Heart right ventricle (tissue), 16 donors: ENCODE measurements at regions of chr10 and their contacts with region 1.

Region 1: GRCh38 chr10:112429147-112429546 is 17.6 kb downstream of the ZDHHC6 start:
- DNase-seq: no peak
- ATAC-seq: no peak
- H3K4me3 ChIP-seq: no peak overlapping the region
- H3K27ac ChIP-seq: no peak overlapping the region
- H3K4me1 ChIP-seq: no peaks in the 10 kb centered on the region
- H3K27me3 ChIP-seq: no peaks in the 10 kb centered on the region
- CTCF ChIP-seq: no peak

Region 2: GRCh38 chr10:112195224-112195623 is 233.9 kb before region 1 on chr10:
- intact Hi-C with region 1: loop called in 1 of 10 experiments (anchors 10 kb)
- DNase-seq: no peak
- ATAC-seq: no peak
- H3K4me3 ChIP-seq: no peak overlapping the region
- H3K27ac ChIP-seq: no peak overlapping the region
- H3K4me1 ChIP-seq: no peaks in the 10 kb centered on the region
- H3K27me3 ChIP-seq: no peaks in the 10 kb centered on the region
- CTCF ChIP-seq: no peak